Mucosa of descending colon (tissue), 3 donors: ENCODE measurements at regions of chr14 and their contacts with region 1.

Region 1: DNA sequence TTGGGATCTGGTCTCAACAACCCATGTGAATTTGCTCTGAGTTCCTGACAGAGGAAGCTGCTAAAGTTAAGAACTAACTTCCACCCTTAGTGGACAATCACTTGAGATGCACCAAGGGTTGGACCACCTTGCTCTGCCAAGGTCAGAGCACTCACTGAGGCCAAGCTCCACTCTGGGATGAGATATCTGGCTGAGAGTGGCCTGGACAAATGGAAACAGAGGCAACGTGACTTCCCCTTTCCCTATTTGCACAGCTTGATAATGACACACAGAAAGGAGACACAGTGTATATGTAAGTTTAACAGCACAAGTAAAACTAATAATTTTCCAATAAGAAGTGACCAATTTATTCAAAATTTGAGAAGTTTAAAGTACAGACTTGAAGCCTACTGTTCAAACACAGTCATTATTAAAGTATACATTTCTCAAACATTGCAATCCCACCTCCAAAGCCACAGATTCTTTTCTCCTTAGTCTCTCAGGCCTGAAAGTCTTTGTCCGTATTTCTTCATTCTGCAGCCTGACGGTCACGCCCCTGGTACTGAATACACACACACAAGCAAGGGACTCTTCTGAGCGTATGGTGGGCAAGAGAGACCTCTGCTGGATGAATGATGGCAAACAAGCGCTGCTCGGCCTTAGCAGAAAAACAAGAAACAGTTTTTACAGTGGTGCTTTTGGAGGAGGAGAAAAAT is 28.6 kb downstream of the TMEM30B start:
- DNase-seq: peak in 2 of 3 donors; percentile 46 to 80
- ATAC-seq: peak; percentile 93
- H3K4me3 ChIP-seq: no peak overlapping the region
- H3K4me1 ChIP-seq: no peaks in the 10 kb centered on the region
- CTCF ChIP-seq: peak; percentile 54

Region 2: DNA sequence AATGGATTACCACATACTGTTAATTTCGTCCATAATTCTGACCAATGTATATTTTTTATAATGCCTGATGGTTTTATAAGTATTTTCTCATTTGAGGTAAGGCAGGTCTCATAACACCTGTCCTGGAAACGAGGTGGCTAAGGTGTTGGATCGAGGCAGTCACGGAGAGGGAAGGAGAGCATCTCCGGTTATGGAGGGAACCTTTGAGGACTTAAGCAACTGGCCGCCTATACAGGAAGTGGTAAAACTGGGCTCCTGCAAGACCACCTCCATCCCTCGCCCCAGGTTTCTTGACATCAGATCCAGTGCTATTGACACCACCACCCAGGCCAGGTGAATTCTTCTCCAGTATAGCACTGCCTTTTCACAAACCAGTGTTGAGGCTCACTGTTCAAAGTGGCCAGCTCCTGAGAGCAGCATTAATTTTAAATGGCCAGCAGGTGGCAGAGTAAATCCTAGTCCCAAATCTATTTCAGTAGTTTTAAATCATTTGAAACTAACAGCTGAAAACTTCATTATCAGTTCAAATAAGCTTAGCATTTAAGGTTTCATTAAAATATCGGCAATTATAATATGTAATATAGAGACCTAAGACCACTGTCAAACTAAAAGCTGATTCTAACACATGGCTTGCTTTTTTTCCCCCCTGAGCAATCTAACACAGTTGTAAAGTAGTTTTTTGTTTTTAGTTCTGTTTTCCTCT is 902.7 kb before region 1 on chr14:
- intact Hi-C with region 1: loop called in 1 of 2 experiments (anchors 10 kb)
- DNase-seq: peak in 1 of 3 donors; percentile 54
- ATAC-seq: peak; percentile 56
- H3K4me3 ChIP-seq: no peak overlapping the region
- H3K4me1 ChIP-seq: no peaks in the 10 kb centered on the region
- CTCF ChIP-seq: peak; percentile 45

Region 3: DNA sequence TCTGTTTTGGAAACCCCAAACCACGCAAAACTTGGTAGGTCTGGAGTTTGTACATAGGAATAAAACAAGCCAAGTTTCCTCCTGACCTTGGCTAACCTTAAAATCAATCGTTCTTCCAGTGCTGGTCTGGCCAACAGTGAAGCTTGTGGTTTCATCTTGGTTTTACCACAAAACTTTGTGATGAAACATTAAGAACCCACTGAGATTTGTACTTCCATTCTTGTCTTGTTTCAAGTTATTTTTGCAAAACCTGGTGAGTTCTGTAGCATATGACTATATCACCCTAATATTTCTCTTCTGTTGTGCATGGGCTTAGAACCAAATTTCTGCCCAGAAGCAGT is 629.6 kb before region 1 on chr14:
- intact Hi-C with region 1: loop called (anchors 5 to 10 kb)
- DNase-seq: no peak
- ATAC-seq: no peak
- H3K4me3 ChIP-seq: no peak overlapping the region
- H3K4me1 ChIP-seq: peaks cover 3% of the 10 kb centered on the region
- CTCF ChIP-seq: no peak

Region 4: DNA sequence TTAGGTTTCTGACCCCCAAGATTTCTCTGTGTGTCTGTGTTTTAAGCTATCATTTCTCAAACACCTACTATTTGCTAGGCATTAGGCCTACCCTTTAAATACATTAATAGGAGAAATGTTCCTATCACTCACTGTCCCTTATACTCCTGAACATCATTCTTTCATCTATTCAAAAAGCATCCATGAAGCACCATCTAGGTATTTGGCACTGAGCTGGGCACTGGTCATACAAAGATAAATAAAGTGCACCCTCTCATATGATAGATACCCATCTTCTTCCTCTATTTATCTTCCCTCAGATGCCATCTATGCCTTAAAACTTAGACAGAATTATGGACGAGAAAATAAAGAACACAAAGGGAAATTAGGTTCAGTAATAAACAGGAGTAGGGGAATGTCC is 623.6 kb before region 1 on chr14:
- intact Hi-C with region 1: loop called (anchors 5 to 10 kb)
- DNase-seq: no peak
- ATAC-seq: no peak
- H3K4me3 ChIP-seq: no peak overlapping the region
- H3K4me1 ChIP-seq: peaks cover 3% of the 10 kb centered on the region
- CTCF ChIP-seq: no peak